ENCODE measurements at regions of chr18 and their contacts with region 1.

Region 1: DNA sequence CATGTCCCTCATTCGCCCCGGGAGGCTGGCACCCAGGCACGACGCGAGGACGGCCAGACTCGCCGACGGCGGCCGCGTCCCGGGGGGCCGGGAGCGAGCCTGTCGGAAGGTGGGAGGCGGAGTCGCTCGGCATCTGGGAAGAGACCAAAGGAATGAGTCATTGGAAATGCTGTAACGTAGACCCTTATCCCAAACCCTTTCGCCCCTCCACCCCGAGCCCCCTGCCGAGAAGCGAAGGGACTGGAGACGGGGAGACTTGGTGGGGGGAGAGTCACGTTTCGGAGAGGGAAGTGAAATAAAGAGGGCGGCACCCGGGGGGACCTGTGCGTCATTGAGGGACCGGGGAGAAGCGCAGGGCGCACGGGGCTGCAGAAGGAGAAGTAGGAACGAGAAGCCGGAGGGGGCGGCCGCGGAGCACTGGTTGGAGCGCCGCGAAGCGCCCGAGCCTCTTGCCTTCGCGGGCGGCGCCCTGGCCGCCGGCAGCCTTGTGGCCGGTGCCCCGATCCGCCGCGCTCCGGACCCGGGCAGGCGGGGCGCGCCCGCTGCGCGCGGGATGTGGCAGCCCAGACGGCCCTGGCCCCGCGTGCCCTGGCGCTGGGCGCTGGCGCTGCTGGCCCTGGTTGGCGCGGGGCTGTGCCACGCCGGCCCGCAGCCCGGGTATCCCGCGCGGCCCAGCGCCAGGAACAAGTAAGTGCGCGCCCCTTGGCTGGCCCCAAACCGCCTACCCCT is at the start of gene EMILIN2:
- DNase-seq: peak; percentile 90
- ATAC-seq: peak; percentile 48
- total RNA-seq, gene EMILIN2: 17.7 TPM

Region 2: GRCh38 chr18:2559249-2559648 is 287.6 kb before region 1 on chr18:
- intact Hi-C with region 1: no loop called
- DNase-seq: no peak
- ATAC-seq: no peak

Region 3: DNA sequence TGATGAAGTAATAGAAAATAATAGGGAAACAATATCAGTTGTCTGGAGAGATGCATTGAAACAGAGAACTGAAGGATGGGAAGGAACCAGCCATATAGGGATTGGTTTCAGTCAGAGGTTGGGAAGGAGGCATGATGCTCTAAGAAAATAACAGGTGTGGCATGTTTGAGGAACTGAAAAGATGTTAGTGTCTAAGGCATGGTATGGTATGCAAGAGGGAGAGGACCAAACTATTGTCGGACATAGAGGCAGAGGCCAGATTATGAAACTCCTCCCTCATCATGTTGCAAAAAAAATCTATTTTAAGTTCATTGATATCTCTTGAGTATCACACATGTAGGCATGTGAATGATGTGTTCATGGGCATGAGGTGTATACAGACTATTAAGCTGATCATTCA is 48.8 kb before region 1 on chr18:
- intact Hi-C with region 1: loop called (anchors 10 kb)
- DNase-seq: no peak
- ATAC-seq: no peak

Region 4: GRCh38 chr18:2814928-2815327 is 31.9 kb before region 1 on chr18:
- intact Hi-C with region 1: no loop called
- DNase-seq: no peak
- ATAC-seq: no peak

Region 5: GRCh38 chr18:2903006-2903405 is 56.2 kb after region 1 on chr18:
- intact Hi-C with region 1: loop called (anchors 5 kb)
- DNase-seq: peak; percentile 81
- ATAC-seq: peak; percentile 63

Measured in Right ventricle myocardium superior (tissue), 1 donor.